Breast epithelium (tissue), 4 donors: ENCODE measurements at regions of chr4 and their contacts with region 1.

Region 1: GRCh38 chr4:186128842-186129241 is 24.3 kb downstream of the FAM149A start:
- DNase-seq: no peak
- H3K4me3 ChIP-seq: no peak overlapping the region
- H3K27ac ChIP-seq: no peak overlapping the region
- H3K4me1 ChIP-seq: no peaks in the 10 kb centered on the region
- H3K27me3 ChIP-seq: no peaks in the 10 kb centered on the region
- CTCF ChIP-seq: no peak
- POLR2A ChIP-seq: no peak

Region 2: GRCh38 chr4:184695178-184695896 is 1433.5 kb before region 1 on chr4:
- intact Hi-C with region 1: no loop called
- DNase-seq: no peak
- H3K4me3 ChIP-seq: no peak overlapping the region
- H3K27ac ChIP-seq: no peak overlapping the region
- H3K4me1 ChIP-seq: no peaks in the 10 kb centered on the region
- H3K27me3 ChIP-seq: no peaks in the 10 kb centered on the region
- CTCF ChIP-seq: no peak
- POLR2A ChIP-seq: no peak

Region 3: DNA sequence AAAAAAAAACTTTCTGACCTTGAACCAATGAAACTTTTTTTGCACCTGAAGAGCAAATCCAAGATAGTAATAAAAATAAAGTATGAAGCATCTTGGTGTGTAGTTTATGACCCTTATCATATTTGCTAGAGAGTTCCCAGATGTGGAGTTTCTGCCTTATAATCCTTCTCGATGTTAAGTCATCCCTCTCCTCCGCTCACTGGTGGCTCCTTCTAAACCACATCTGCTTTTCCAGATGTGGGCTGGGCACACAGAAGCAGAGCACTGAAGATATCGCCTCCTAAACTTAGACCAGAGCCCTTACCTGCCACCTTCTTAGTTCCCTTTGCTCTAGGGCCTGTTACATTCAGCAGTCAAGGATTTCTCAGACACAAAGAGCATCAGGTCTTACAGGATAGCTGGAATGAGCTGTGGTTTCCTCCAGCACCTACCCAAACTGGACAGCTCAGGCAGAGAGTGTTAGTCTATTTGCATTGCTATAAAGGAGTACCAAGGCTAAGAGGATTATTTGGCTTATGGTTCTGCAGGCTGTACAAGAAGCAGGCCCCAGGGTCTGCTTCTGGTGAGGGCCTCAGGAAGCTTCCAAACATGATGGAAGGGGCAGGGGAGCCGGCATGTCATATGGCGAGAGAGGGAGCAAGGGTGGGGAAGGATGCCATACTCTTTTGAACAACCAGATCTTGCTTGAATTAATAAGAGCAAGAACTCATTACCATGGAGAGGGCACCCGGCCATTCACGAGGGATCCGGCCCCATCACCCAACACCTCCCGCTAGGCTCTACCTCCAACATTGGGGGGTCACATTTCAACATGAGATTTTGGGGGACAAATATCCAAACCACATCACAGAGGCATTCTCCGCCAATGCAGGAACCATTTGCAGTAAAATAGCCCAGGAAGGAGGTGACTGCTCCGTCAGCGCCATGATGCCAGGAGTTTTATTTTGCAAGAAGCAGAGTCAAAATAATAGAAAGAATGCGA is 1186.1 kb before region 1 on chr4:
- intact Hi-C with region 1: loop called (anchors 5 kb)
- DNase-seq: no peak
- H3K4me3 ChIP-seq: no peak overlapping the region
- H3K27ac ChIP-seq: no peak overlapping the region
- H3K4me1 ChIP-seq: no peaks in the 10 kb centered on the region
- H3K27me3 ChIP-seq: no peaks in the 10 kb centered on the region
- CTCF ChIP-seq: no peak
- POLR2A ChIP-seq: no peak